Ascending aorta (tissue), 2 donors: ENCODE measurements at regions of chr12 and their contacts with region 1.

Region 1: DNA sequence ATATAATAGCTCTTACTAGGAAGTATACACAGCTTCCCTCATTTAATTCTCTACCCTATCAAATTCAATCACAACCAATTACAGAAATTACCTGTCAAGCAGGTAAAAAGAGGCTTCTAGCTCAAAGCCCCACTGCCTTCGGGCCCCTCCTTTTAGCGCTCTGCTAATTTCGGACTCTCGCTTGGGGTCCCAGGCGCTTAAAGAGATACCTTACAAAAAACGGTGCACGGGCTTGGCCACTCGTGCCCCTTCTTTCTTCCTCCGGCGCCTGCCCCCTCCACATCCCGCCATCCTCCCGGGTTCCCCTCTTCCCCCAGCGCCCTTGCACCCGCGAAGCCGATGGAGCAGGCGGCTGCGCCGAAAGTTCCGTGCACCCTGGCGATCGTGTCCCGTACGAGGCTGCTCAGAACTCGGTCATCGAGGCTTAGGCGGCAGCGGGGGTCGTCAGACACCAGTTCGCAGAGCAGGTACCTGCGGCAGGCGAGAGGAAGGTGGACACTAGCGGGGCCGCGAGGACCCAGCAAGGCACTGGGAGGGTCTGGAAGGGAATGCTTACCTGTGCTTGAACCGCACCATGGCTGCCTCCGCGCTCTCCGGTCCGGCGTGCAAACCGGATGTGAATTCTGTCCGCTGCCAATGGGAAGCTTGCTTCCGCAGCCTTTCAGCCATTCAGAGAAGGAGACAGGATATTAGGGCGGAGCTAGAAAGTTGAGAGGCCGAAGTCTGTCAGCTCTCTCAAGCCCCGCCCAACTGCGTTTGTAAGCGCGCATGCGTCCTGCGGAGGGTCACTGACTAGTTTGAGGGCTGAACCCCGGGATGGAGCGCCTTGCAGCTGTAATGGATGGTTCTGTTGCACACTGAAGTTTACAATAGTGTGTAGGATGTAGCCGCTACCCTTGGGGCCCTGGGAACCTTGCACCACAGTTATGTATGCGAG is at the start of gene POP5:
- DNase-seq: peak; percentile 90 to 98
- H3K4me3 ChIP-seq: peak within 1 kb of the TSS; percentile 63 to 87
- H3K27ac ChIP-seq: peak within 1 kb of the TSS; percentile 56 to 69
- H3K4me1 ChIP-seq: peaks cover 3% of the 10 kb centered on the region in 2 donors
- H3K27me3 ChIP-seq: no peaks in the 10 kb centered on the region
- CTCF ChIP-seq: no peak
- total RNA-seq, gene POP5: 3.0 TPM

Region 2: DNA sequence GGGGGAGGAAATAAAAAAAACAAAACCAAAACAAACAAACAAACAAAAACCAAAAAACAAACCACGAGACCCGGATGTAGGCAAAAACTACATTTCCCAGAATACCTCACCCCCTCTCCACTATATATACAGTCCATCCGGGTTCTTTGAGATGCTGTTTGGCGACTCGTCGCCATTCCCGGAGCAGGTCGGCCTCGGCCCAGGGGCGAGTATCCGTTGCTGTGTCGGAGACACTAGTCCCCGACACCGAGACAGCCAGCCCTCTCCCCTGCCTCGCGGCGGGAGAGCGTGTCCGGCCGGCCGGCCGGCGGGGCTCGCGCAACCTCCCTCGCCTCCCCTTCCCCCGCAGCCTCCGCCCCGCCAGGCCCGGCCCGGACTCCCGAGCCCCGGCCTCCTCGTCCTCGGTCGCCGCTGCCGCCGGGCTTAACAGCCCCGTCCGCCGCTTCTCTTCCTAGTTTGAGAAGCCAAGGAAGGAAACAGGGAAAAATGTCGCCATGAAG is 46.8 kb before region 1 on chr12 and contains the start of gene RNF10:
- intact Hi-C with region 1: loop called (anchors 2 kb)
- DNase-seq: peak in 1 of 2 donors; percentile 82
- H3K4me3 ChIP-seq: peak within 1 kb of the TSS; percentile 88 to 96
- H3K27ac ChIP-seq: peak within 1 kb of the TSS; percentile 93 to 96
- H3K4me1 ChIP-seq: peaks cover 19 to 41% of the 10 kb centered on the region in 2 donors
- H3K27me3 ChIP-seq: no peaks in the 10 kb centered on the region
- CTCF ChIP-seq: no peak
- total RNA-seq, gene RNF10: 147 TPM

Region 3: DNA sequence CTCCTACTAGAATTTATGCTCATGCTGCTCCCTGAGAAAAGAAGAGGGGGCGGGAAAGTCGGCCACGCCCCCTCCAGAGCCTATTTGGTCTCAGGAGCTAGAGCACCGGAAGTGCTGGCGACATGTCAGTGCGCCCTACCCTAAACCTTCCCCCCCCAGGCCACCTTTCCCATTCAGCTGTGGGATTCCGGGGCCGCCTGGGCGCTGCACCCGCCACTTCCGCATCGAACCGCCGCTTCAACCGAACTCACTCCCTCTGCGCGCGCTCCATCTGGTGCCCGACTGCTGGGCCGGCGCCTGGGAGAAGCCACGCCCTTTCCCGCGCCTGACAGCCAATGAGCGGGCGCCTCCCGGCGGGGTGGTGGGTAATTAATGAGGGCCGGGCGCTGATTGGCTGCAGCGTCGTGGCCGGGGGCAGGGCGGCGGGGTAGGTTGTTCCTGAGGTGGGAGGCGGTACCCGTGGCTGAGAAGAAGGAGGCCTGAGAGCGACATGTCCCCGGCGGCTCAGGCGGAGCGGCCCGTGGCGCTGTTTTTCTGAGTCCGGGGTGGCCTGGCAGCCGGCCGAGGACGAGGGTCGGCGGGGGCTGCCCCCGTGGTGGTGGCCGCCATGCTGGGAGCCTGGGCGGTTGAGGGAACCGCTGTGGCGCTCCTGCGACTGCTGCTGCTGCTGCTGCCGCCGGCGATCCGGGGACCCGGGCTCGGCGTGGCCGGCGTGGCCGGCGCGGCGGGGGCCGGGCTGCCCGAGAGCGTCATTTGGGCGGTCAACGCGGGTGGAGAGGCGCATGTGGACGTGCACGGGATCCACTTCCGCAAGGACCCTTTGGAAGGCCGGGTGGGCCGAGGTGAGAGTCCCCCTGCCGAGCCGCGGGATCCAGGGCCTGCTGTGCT is 105.9 kb after region 1 on chr12 and contains the start of gene MLEC:
- intact Hi-C with region 1: loop called (anchors 2 kb)
- DNase-seq: peak; percentile 92 to 99
- H3K4me3 ChIP-seq: peak within 1 kb of the TSS; percentile 75 to 99
- H3K27ac ChIP-seq: peak within 1 kb of the TSS; percentile 87 to 89
- H3K4me1 ChIP-seq: peaks cover 7 to 28% of the 10 kb centered on the region in 2 donors
- H3K27me3 ChIP-seq: no peaks in the 10 kb centered on the region
- CTCF ChIP-seq: peak in 2 of 3 experiments; percentile 1 to 21
- total RNA-seq, gene MLEC: 47.5 TPM

Region 4: GRCh38 chr12:120725659-120726509 is 144.8 kb after region 1 on chr12 and contains the start of gene ACADS:
- intact Hi-C with region 1: loop called (anchors 5 kb)
- DNase-seq: peak; percentile 40 to 93
- H3K4me3 ChIP-seq: peak within 1 kb of the TSS; percentile 75 to 91
- H3K27ac ChIP-seq: peak within 1 kb of the TSS; percentile 83 to 85
- H3K4me1 ChIP-seq: peaks cover 0 to 8% of the 10 kb centered on the region in 2 donors
- H3K27me3 ChIP-seq: no peaks in the 10 kb centered on the region
- CTCF ChIP-seq: no peak
- total RNA-seq, gene ACADS: 58.5 TPM

Region 5: GRCh38 chr12:120971299-120972179 is 390.5 kb after region 1 on chr12:
- intact Hi-C with region 1: loop called (anchors 2 kb)
- DNase-seq: no peak
- H3K4me3 ChIP-seq: no peak overlapping the region
- H3K27ac ChIP-seq: no peak overlapping the region
- H3K4me1 ChIP-seq: no peaks in the 10 kb centered on the region
- H3K27me3 ChIP-seq: no peaks in the 10 kb centered on the region
- CTCF ChIP-seq: peak; percentile 69 to 81 (median 71)